ENCODE measurements at regions of chr19 and their contacts with region 1.

Region 1: GRCh38 chr19:531009-531752 is 379 bp upstream of the CDC34 start:
- DNase-seq: peak; percentile 92
- H3K4me3 Mint-ChIP-seq: peak overlapping the region; percentile 78
- H3K27ac Mint-ChIP-seq: peak overlapping the region; percentile 72
- H3K4me1 Mint-ChIP-seq: peaks cover 21% of the 10 kb centered on the region
- H3K27me3 Mint-ChIP-seq: peaks cover 2% of the 10 kb centered on the region

Region 2: DNA sequence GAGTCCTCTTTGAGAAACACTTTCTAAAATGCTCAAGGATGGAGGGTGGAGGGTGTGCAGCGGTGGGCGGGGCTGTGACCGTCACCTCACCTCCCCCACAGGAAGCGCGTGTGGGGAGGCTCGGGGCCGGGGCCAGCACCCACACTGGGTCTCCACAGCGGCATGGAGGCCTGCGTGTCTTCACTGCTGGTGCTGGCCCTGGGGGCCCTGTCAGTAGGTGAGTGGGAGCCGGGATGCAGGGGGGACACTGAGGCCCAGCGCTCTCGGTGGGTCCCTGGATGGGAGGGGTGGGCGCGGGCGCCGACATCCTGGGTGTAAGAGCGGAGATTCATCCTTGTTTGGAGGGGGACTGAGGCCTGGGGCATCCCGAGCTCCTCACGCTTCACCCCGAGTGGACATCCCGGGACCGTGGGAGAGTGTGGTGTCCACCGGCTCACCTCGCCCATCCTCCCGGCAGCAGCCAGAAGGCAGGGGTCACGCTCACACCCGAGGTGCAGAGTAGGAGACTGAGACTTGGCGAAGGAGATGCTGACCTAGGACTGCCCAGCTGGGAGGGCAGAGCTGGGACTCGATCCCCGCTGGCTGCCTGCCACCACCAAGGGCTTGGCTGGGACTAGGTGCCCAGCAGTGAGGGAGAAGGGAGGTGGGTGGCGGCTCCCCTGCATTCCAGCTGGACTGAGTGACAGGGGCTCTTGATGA is 12.9 kb after region 1 on chr19 and contains the start of gene GZMM:
- CTCF ChIA-PET with region 1: interaction called, 3 read pairs
- POLR2A ChIA-PET with region 1: interaction called, 21 read pairs
- DNase-seq: peak; percentile 84
- H3K4me3 Mint-ChIP-seq: peak within 1 kb of the TSS; percentile 71
- H3K27ac Mint-ChIP-seq: peak within 1 kb of the TSS; percentile 75
- H3K4me1 Mint-ChIP-seq: peaks cover 21% of the 10 kb centered on the region
- H3K27me3 Mint-ChIP-seq: no peaks in the 10 kb centered on the region
- total RNA-seq, gene GZMM: 45.1 to 45.2 TPM

Measured in activated CD4-positive, alpha-beta memory T cell treated with anti-CD3 and anti-CD28 coated beads, Interleukin-2, amount 10 ng/mL, durations not matched to agents 7 days and 5 days (primary cell).